CD4-positive, alpha-beta memory T cell (primary cell): ENCODE measurements at regions of chr9 and their contacts with region 1.

Region 1: DNA sequence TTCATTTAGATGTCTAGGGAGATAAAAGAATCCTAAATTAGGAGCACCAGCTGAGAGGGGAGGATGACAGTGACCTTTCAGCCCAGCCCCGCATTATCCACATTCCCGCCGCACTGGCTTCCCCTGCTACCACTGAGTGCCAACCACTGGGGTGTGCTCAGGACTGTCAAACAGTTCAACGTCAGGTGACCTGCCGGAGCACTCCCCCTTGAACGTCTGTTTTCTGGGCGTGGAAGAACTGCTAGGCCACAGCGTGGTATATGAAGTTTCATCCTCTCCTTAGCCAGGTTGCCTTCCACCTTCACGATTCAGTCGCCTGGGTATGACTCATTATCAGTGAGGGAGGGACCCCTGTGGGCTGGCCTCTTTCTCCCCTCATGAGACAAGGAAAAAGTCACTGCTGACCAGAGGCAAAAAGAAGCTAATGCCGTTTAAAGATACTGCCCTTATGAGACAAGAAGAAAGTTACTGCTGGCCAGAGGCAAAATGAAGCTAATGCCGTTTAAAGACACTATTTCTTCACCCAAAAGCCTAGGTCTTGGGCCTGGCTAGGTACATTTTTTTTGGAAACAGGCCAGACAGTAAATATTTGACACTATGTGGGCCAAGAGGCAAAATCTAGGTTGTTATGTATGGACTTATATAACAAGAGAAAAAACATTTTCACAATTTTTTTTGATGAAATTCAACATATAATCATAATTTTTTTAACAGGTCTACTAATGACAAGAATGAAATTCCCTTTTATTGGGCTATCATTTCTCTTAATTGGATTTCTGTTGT is 4.6 kb downstream of the NMRK1 start:
- DNase-seq: peak; percentile 33 to 76 (median 50)
- H3K4me3 ChIP-seq: no peak overlapping the region
- H3K4me3 Mint-ChIP-seq: peak overlapping the region in 6 of 8 donors; percentile 26 to 66 (median 51)
- H3K27ac ChIP-seq: no peak overlapping the region
- H3K27ac Mint-ChIP-seq: peak overlapping the region; percentile 86 to 94 (median 90)
- H3K4me1 ChIP-seq: peaks cover 44% of the 10 kb centered on the region
- H3K4me1 Mint-ChIP-seq: peaks cover 30 to 65% (median 41%) of the 10 kb centered on the region in 4 donors
- H3K27me3 ChIP-seq: no peaks in the 10 kb centered on the region
- H3K27me3 Mint-ChIP-seq: no peaks in the 10 kb centered on the region

Region 2: GRCh38 chr9:74595286-74595685 is 488.1 kb before region 1 on chr9:
- CTCF ChIA-PET with region 1: no interaction called
- POLR2A ChIA-PET with region 1: no interaction called
- intact Hi-C with region 1: no loop called
- DNase-seq: no peak
- H3K4me3 ChIP-seq: no peak overlapping the region
- H3K4me3 Mint-ChIP-seq: no peak overlapping the region
- H3K27ac ChIP-seq: no peak overlapping the region
- H3K27ac Mint-ChIP-seq: no peak overlapping the region
- H3K4me1 ChIP-seq: no peaks in the 10 kb centered on the region
- H3K4me1 Mint-ChIP-seq: no peaks in the 10 kb centered on the region
- H3K27me3 ChIP-seq: no peaks in the 10 kb centered on the region
- H3K27me3 Mint-ChIP-seq: peaks cover 4 to 5% of the 10 kb centered on the region in 2 donors

Region 3: GRCh38 chr9:74960563-74960962 is 122.8 kb before region 1 on chr9:
- CTCF ChIA-PET with region 1: no interaction called
- POLR2A ChIA-PET with region 1: no interaction called
- intact Hi-C with region 1: no loop called
- DNase-seq: no peak
- H3K4me3 ChIP-seq: no peak overlapping the region
- H3K4me3 Mint-ChIP-seq: no peak overlapping the region
- H3K27ac ChIP-seq: no peak overlapping the region
- H3K27ac Mint-ChIP-seq: no peak overlapping the region
- H3K4me1 ChIP-seq: no peaks in the 10 kb centered on the region
- H3K4me1 Mint-ChIP-seq: peaks cover 0 to 3% (median 0%) of the 10 kb centered on the region in 4 donors
- H3K27me3 ChIP-seq: no peaks in the 10 kb centered on the region
- H3K27me3 Mint-ChIP-seq: no peaks in the 10 kb centered on the region

Region 4: GRCh38 chr9:75039801-75040200 is 43.6 kb before region 1 on chr9:
- CTCF ChIA-PET with region 1: no interaction called
- POLR2A ChIA-PET with region 1: no interaction called
- intact Hi-C with region 1: no loop called
- DNase-seq: no peak
- H3K4me3 ChIP-seq: no peak overlapping the region
- H3K4me3 Mint-ChIP-seq: no peak overlapping the region
- H3K27ac ChIP-seq: no peak overlapping the region
- H3K27ac Mint-ChIP-seq: no peak overlapping the region
- H3K4me1 ChIP-seq: no peaks in the 10 kb centered on the region
- H3K4me1 Mint-ChIP-seq: no peaks in the 10 kb centered on the region
- H3K27me3 ChIP-seq: no peaks in the 10 kb centered on the region
- H3K27me3 Mint-ChIP-seq: peaks cover 4 to 6% of the 10 kb centered on the region in 2 donors

Region 5: DNA sequence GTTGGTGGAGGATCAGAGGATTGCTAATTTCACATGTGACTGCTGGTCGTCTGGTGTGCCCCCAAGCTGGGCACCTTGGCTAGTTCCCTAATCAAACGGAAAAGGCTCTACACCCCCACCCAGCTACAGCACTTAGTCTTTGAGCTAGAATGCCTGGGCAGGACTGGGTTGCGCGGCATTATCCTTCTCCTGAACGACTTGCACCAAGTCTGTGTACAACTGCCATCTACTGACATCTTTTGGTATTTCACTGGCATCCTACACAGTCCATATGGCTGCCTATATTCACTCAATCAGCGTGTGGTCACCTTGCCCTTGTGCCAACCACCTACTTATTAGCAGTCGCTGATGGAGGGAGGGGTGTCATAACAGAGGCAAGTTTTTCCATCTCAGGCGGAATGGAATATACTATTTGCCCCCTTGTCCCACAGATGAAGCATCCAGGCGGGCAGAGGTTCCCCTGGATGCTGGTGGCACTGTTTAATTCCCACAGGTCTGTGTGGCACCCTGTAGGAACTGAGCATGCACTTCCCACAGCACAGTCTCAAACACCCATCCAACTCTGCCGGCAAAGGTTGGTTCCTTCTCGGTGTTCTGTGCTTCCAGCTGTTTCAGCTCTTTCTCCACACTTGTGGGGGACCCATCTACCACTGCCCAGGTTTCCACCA is 155.1 kb after region 1 on chr9:
- CTCF ChIA-PET with region 1: interaction called, 4 read pairs
- POLR2A ChIA-PET with region 1: no interaction called
- intact Hi-C with region 1: loop called (anchors 1 kb)
- DNase-seq: peak; percentile 45 to 66 (median 49)
- H3K4me3 ChIP-seq: no peak overlapping the region
- H3K4me3 Mint-ChIP-seq: no peak overlapping the region
- H3K27ac ChIP-seq: no peak overlapping the region
- H3K27ac Mint-ChIP-seq: peak overlapping the region in 1 of 7 donors; percentile 25
- H3K4me1 ChIP-seq: no peaks in the 10 kb centered on the region
- H3K4me1 Mint-ChIP-seq: no peaks in the 10 kb centered on the region
- H3K27me3 ChIP-seq: no peaks in the 10 kb centered on the region
- H3K27me3 Mint-ChIP-seq: no peaks in the 10 kb centered on the region